ENCODE measurements at regions of chr15 and their contacts with region 1.

Region 1: GRCh38 chr15:57769266-57769665 is 62.8 kb downstream of the POLR2M start:
- DNase-seq: no peak

Region 2: DNA sequence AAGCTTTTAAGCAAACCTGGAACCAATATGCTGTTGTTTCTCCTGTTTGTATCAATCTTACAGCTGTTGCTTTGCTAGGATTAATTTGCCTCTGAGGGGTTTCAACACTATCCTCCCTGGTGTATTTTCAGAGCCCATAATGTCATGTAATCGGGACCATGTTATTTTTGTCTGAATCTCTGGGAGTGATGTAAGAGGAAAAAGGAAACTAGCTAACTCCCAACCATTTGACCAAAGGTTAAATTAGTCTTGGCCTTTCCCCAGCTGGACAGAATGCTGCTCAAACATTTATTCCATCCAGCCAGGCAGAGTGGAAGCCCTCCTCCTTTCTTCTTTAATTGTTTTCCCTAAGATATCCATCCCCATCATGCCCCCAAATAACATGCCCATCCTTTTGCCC is 154.0 kb after region 1 on chr15:
- intact Hi-C with region 1: loop called (anchors 10 kb)
- DNase-seq: no peak

Measured in cardiac septum (tissue), 1 donor.